Activated CD4-positive, alpha-beta T cell treated with anti-CD3 and anti-CD28 coated beads, Interleukin-2, amount 10 ng/mL, durations not matched to agents 7 days and 5 days (primary cell): ENCODE measurements at regions of chr14 and their contacts with region 1.

Region 1: GRCh38 chr14:76784266-76785264 is 23.3 kb downstream of the VASH1 start:
- DNase-seq: peak; percentile 63
- H3K4me3 Mint-ChIP-seq: no peak overlapping the region
- H3K27ac Mint-ChIP-seq: peak overlapping the region; percentile 63
- H3K4me1 Mint-ChIP-seq: peaks cover 45% of the 10 kb centered on the region
- H3K27me3 Mint-ChIP-seq: no peaks in the 10 kb centered on the region

Region 2: GRCh38 chr14:75831458-75831857 is 953.1 kb before region 1 on chr14:
- CTCF ChIA-PET with region 1: no interaction called
- POLR2A ChIA-PET with region 1: no interaction called
- DNase-seq: peak; percentile 73
- H3K4me3 Mint-ChIP-seq: peak overlapping the region; percentile 12
- H3K27ac Mint-ChIP-seq: peak overlapping the region; percentile 90
- H3K4me1 Mint-ChIP-seq: peaks cover 29% of the 10 kb centered on the region
- H3K27me3 Mint-ChIP-seq: no peaks in the 10 kb centered on the region

Region 3: GRCh38 chr14:76546426-76547221 is 237.9 kb before region 1 on chr14:
- CTCF ChIA-PET with region 1: no interaction called
- POLR2A ChIA-PET with region 1: no interaction called
- DNase-seq: peak; percentile 10
- H3K4me3 Mint-ChIP-seq: no peak overlapping the region
- H3K27ac Mint-ChIP-seq: no peak overlapping the region
- H3K4me1 Mint-ChIP-seq: no peaks in the 10 kb centered on the region
- H3K27me3 Mint-ChIP-seq: peaks cover 3% of the 10 kb centered on the region

Region 4: GRCh38 chr14:76710056-76711010 is 74.2 kb before region 1 on chr14:
- CTCF ChIA-PET with region 1: interaction called, 14 read pairs
- POLR2A ChIA-PET with region 1: no interaction called
- DNase-seq: peak; percentile 54
- H3K4me3 Mint-ChIP-seq: no peak overlapping the region
- H3K27ac Mint-ChIP-seq: no peak overlapping the region
- H3K4me1 Mint-ChIP-seq: no peaks in the 10 kb centered on the region
- H3K27me3 Mint-ChIP-seq: peaks cover 5% of the 10 kb centered on the region

Region 5: GRCh38 chr14:76726551-76726970 is 58.0 kb before region 1 on chr14:
- CTCF ChIA-PET with region 1: no interaction called
- POLR2A ChIA-PET with region 1: no interaction called
- DNase-seq: no peak
- H3K4me3 Mint-ChIP-seq: no peak overlapping the region
- H3K27ac Mint-ChIP-seq: no peak overlapping the region
- H3K4me1 Mint-ChIP-seq: no peaks in the 10 kb centered on the region
- H3K27me3 Mint-ChIP-seq: peaks cover 31% of the 10 kb centered on the region

Region 6: GRCh38 chr14:76773188-76773885 is 11.2 kb before region 1 on chr14:
- CTCF ChIA-PET with region 1: interaction called, 17 read pairs
- POLR2A ChIA-PET with region 1: no interaction called
- DNase-seq: no peak
- H3K4me3 Mint-ChIP-seq: no peak overlapping the region
- H3K27ac Mint-ChIP-seq: no peak overlapping the region
- H3K4me1 Mint-ChIP-seq: peaks cover 21% of the 10 kb centered on the region
- H3K27me3 Mint-ChIP-seq: no peaks in the 10 kb centered on the region